ENCODE measurements at regions of chr11 and their contacts with region 1.

Region 1: GRCh38 chr11:119306373-119306890 is 10.5 kb downstream of the MCAM start:
- DNase-seq: no peak
- H3K27ac ChIP-seq: peak overlapping the region; percentile 50
- CTCF ChIP-seq: no peak

Region 2: DNA sequence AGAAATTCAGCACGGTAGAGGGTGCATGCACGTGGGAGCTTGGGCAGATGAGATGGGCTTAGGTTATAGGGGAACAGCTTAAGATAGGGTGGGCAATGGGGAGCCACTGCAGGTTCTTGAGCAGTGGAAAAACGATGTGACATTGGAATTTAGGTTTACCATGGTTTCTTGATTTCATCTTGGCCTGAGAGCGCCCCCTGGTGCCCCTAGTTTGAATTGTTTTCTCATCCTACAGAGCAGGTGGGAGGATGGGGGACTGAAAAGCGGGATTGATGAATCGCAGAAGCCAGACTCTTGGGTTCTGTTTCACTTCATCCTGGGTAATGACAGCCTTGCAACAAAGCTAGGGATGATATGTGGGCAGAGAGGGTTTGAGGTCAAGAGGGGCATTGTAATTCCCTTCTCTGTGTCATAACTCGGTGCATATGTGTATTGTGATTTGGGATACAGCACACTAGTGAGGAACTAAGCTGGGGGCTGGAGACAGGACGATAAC is 17.2 kb after region 1 on chr11:
- CTCF ChIA-PET with region 1: interaction called, 28 read pairs
- POLR2A ChIA-PET with region 1: no interaction called
- DNase-seq: peak; percentile 73
- H3K27ac ChIP-seq: no peak overlapping the region
- CTCF ChIP-seq: peak; percentile 83

Region 3: DNA sequence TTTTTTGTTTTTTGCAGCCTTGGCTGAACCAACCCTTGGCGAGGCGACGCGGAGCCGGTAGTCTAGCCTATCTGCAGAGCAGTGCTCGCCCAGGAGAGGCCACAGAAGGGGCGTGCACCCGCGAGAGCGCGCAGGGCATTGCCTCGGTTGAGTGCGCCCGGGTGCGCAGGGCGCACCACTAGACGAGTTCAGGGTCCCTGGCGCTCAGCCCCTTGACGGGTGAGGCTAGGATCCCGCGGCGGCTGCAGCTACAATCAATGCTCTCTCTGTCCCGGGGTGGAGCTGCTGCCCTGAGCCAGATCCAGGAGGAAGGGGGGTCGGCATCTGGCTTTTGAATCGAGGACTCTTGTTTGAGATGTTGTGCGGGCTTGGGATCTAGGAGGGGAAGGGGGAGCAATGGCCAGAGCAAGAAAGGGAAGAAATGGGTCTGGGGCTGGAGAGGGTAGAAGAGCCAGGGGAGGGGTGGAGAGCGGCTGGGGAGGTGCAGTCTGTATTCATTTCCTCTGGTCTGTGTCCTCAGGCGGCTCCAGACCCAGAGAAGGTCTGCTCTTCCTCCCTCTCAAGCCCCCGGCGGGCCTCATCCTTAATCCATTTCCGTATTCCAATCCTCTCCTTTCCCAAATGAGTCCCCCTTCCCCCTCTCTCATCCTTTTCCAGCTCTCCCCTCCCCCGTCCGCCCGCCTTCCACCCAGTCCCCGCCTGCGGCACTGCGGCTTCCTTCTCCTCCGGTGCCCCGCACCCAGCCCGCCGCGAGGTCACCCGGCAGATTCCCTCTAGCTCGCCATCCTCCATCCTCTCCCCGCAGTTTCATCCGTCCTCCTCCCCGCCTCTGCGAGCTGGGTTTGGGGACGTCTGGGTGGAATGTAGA is 115.7 kb after region 1 on chr11:
- CTCF ChIA-PET with region 1: no interaction called
- POLR2A ChIA-PET with region 1: no interaction called
- DNase-seq: no peak
- H3K27ac ChIP-seq: no peak overlapping the region
- CTCF ChIP-seq: no peak

Measured in RWPE1 (cell line).